Sciatic nerve (tissue), 2 donors: ENCODE measurements at regions of chr11 and their contacts with region 1.

Region 1: GRCh38 chr11:43177975-43178374 is 133.8 kb upstream of the API5 start:
- DNase-seq: no peak
- ATAC-seq: no peak

Region 2: GRCh38 chr11:42319921-42320320 is 858.1 kb before region 1 on chr11:
- intact Hi-C with region 1: no loop called
- DNase-seq: no peak
- ATAC-seq: no peak

Region 3: GRCh38 chr11:44005063-44005701 is 827.2 kb after region 1 on chr11:
- intact Hi-C with region 1: loop called (anchors 5 kb)
- DNase-seq: no peak
- ATAC-seq: no peak